CD14-positive monocyte (primary cell): ENCODE measurements at regions of chr1 and their contacts with region 1.

Region 1: GRCh38 chr1:30900931-30901560 is 7.5 kb downstream of the SDC3 start:
- DNase-seq: no peak
- H3K4me3 ChIP-seq: no peak overlapping the region
- H3K4me3 Mint-ChIP-seq: no peak overlapping the region
- H3K27ac ChIP-seq: no peak overlapping the region
- H3K27ac Mint-ChIP-seq: no peak overlapping the region
- H3K4me1 ChIP-seq: peaks cover 0 to 5% of the 10 kb centered on the region in 2 donors
- H3K4me1 Mint-ChIP-seq: peaks cover 9% of the 10 kb centered on the region
- H3K27me3 ChIP-seq: peaks cover 0 to 44% of the 10 kb centered on the region in 2 donors
- H3K27me3 Mint-ChIP-seq: peaks cover 39 to 70% (median 54%) of the 10 kb centered on the region in 3 donors
- CTCF ChIP-seq: no peak

Region 2: GRCh38 chr1:30830537-30830936 is 70.5 kb before region 1 on chr1:
- intact Hi-C with region 1: loop called in 1 of 2 experiments (anchors 2 kb)
- DNase-seq: peak; percentile 21 to 56 (median 54)
- H3K4me3 ChIP-seq: no peak overlapping the region
- H3K4me3 Mint-ChIP-seq: peak overlapping the region in 1 of 2 donors; percentile 56
- H3K27ac ChIP-seq: no peak overlapping the region
- H3K27ac Mint-ChIP-seq: no peak overlapping the region
- H3K4me1 ChIP-seq: peaks cover 12 to 13% of the 10 kb centered on the region in 2 donors
- H3K4me1 Mint-ChIP-seq: peaks cover 16% of the 10 kb centered on the region
- H3K27me3 ChIP-seq: peaks cover 51 to 57% of the 10 kb centered on the region in 2 donors
- H3K27me3 Mint-ChIP-seq: peaks cover 49 to 75% (median 53%) of the 10 kb centered on the region in 3 donors
- CTCF ChIP-seq: no peak